Activated CD8-positive, alpha-beta T cell treated with anti-CD3 and anti-CD28 coated beads for 36 hours (primary cell): ENCODE measurements at regions of chr2 and their contacts with region 1.

Region 1: DNA sequence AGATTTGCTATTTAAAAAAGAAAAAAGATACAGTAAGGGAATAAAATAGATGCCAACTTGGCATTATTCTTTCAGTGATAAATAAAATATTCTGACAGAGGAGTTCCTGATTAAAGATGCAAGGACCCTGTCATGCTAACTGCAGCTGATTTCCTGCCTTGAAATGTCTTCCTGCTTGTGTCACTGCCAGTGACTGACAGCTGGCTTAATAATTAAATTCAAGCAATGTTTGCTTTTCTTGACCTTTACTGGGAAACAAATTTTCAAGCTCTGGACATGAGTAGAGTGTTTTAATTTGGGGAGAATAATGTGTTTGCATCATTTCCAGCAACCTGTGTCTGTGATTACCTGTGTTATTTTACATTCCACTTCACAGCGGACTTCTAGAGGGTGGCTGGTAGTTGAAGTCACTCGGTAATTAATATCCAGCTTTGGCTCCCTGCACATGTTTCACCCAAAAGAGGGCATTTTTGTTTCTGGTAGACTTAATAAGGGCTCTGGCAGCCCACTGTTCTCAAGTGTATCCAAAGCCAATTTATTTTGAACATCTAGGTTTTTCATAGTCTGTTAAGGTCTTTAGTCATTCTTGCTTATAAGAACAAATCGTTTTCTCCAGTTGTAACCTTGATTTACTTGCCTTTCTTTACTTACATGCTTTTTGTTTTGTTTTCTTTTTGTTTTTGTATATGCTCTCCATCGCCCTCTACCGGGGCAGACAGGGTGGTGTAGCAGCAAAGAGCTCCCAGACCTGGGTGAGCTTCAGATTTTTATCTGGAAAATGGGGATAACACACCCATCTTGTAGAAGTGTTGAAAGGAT is 48.5 kb upstream of the PROKR1 start:
- DNase-seq: peak; percentile 71
- ATAC-seq: peak; percentile 74
- H3K4me3 Mint-ChIP-seq: no peak overlapping the region
- H3K27ac Mint-ChIP-seq: no peak overlapping the region
- H3K4me1 Mint-ChIP-seq: peaks cover 6% of the 10 kb centered on the region
- H3K27me3 Mint-ChIP-seq: peaks cover 6% of the 10 kb centered on the region
- CTCF ChIP-seq: peak; percentile 97

Region 2: DNA sequence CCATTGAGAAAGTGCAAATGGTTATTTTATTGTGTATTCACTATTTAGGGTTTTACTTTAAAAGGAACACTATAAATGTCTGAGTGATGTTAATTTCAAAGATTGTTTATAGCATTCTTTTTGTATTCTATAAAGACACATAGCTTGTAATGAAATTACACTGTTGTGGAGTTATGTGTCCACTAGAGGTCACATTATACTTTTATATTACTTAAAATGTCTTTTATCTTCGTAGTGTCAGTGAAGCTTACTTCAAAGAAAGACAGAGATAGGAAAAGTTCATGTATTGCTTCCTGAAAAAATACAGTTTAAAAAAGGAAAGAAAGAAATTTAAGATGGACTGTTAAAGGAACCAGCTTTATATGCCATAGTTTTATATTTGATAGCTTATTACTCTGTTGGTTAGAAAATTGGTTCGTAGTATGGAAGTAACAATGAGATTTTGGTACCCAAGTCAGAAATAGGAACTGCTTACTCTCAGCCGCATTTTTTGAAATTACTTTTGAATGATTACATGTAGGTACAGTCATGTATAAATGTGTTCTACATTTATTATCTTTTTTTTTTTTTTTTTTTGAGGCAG is 107.0 kb before region 1 on chr2:
- CTCF ChIA-PET with region 1: interaction called, 12 read pairs
- POLR2A ChIA-PET with region 1: no interaction called
- intact Hi-C with region 1: loop called (anchors 10 kb)
- DNase-seq: no peak
- ATAC-seq: peak; percentile 60
- H3K4me3 Mint-ChIP-seq: no peak overlapping the region
- H3K27ac Mint-ChIP-seq: no peak overlapping the region
- H3K4me1 Mint-ChIP-seq: peaks cover 5% of the 10 kb centered on the region
- H3K27me3 Mint-ChIP-seq: no peaks in the 10 kb centered on the region
- CTCF ChIP-seq: peak; percentile 72

Region 3: DNA sequence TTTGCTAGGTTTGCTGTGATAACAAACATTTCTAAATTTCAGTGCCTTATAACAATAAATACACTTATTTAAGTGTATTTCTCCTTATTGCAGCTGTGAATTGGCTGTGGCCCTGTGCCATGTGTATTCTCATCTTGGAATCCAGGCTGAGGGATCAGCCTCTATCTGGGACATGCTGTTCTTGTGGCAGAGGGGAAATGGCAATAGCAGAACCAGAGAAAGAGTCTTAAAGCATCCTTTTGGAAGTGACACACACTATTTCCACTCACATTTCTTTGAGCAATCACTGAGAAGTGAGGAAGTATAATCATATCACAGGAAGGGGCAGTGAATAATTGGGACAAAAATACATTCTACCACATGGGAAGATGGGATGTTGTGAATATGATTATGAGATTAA is 17.7 kb before region 1 on chr2:
- CTCF ChIA-PET with region 1: interaction called, 10 read pairs
- POLR2A ChIA-PET with region 1: no interaction called
- intact Hi-C with region 1: no loop called
- DNase-seq: no peak
- ATAC-seq: no peak
- H3K4me3 Mint-ChIP-seq: no peak overlapping the region
- H3K27ac Mint-ChIP-seq: no peak overlapping the region
- H3K4me1 Mint-ChIP-seq: no peaks in the 10 kb centered on the region
- H3K27me3 Mint-ChIP-seq: no peaks in the 10 kb centered on the region
- CTCF ChIP-seq: no peak

Region 4: GRCh38 chr2:68627615-68628014 is 32.7 kb after region 1 on chr2:
- CTCF ChIA-PET with region 1: interaction called, 13 read pairs
- POLR2A ChIA-PET with region 1: no interaction called
- intact Hi-C with region 1: no loop called
- DNase-seq: no peak
- ATAC-seq: no peak
- H3K4me3 Mint-ChIP-seq: no peak overlapping the region
- H3K27ac Mint-ChIP-seq: no peak overlapping the region
- H3K4me1 Mint-ChIP-seq: no peaks in the 10 kb centered on the region
- H3K27me3 Mint-ChIP-seq: peaks cover 2% of the 10 kb centered on the region
- CTCF ChIP-seq: no peak

Region 5: DNA sequence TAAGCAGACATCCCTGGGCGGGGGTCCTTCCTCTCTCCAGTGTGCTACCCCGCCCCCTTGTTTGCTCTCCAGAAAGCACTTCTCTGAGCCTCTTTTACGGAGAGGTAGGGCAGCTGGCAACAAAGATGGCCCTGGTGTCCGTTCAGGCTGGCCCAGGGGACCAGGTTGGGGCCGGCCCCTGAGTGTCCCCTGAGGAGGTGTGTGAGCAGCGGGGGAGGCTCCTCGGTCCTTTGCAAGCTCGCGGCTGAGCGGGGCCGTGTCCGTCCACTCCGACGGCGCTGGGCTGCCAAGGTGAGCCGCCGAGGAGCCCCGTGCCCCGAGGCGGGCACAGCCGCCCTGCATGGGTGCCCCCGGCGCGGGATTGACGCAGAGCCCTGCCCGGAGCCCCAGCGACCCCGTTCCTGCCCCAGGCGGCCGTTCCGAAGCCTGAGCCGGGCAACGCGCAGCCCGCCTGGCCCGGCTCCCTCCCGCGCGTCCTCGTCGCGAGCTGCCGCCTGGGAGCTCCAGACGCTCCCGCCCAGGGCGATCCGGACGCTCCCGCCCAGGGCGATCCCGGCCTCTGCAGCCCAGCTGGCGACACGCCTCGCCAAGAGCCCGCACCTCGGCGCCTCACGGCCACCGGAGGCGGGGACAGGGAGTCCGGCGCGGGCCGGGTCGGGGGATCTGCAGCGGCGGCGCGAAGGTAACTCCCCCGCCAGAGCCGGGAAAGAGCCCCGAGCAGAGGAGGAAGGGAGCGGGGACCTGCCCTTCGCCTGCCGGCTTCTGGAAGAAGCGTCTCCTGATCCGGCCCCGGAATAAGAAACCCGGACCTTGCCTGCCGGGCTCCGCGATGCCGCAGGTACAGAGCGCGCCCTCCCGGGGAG is 48.4 kb after region 1 on chr2 and contains the start of gene PROKR1:
- CTCF ChIA-PET with region 1: interaction called, 10 read pairs
- POLR2A ChIA-PET with region 1: no interaction called
- intact Hi-C with region 1: no loop called
- DNase-seq: peak; percentile 18
- ATAC-seq: peak; percentile 38
- H3K4me3 Mint-ChIP-seq: peak within 1 kb of the TSS; percentile 22
- H3K27ac Mint-ChIP-seq: no peak within 1 kb of the TSS
- H3K4me1 Mint-ChIP-seq: peaks cover 10% of the 10 kb centered on the region
- H3K27me3 Mint-ChIP-seq: peaks cover 67% of the 10 kb centered on the region
- CTCF ChIP-seq: no peak
- total RNA-seq, gene PROKR1: not detected

Region 6: GRCh38 chr2:68762665-68763064 is 167.8 kb after region 1 on chr2:
- CTCF ChIA-PET with region 1: no interaction called
- POLR2A ChIA-PET with region 1: no interaction called
- intact Hi-C with region 1: no loop called
- DNase-seq: no peak
- ATAC-seq: peak; percentile 38
- H3K4me3 Mint-ChIP-seq: peak overlapping the region; percentile 56
- H3K27ac Mint-ChIP-seq: peak overlapping the region; percentile 95
- H3K4me1 Mint-ChIP-seq: peaks cover 90% of the 10 kb centered on the region
- H3K27me3 Mint-ChIP-seq: no peaks in the 10 kb centered on the region
- CTCF ChIP-seq: no peak

Region 7: GRCh38 chr2:69095305-69095704 is 500.4 kb after region 1 on chr2:
- CTCF ChIA-PET with region 1: no interaction called
- POLR2A ChIA-PET with region 1: no interaction called
- intact Hi-C with region 1: no loop called
- DNase-seq: no peak
- ATAC-seq: no peak
- H3K4me3 Mint-ChIP-seq: no peak overlapping the region
- H3K27ac Mint-ChIP-seq: no peak overlapping the region
- H3K4me1 Mint-ChIP-seq: no peaks in the 10 kb centered on the region
- H3K27me3 Mint-ChIP-seq: peaks cover 4% of the 10 kb centered on the region
- CTCF ChIP-seq: no peak